A549 (cell line): ENCODE measurements at regions of chr2 and their contacts with region 1.

Region 1: DNA sequence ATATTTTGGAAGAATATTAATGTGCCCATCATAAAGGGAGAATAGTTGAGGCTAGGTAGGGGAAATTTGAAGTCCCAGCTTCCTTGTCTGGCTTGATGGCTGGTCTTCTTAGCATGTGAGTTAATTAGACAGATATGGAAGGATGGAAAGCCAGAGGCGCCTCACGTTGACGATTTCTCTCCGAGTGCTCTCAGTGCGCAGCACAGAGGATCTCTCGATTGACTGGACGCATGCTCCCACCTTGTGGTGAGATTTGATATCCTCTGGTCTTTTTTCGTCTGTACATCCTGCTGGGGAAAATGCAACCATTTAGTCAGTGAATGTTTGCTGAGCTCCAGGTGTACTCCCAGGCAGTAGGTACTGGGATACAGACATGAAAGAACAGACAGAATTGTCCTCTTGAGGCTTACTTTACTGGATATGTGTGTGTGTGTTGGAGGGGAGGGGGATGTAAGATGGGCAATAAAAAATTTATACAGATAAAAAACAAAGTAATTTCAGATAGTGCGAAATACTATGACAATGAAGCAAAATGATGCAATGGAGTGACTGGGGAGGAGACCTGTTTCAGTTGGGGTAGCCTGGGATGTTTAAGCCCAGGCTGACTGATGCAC is 66.9 kb upstream of the ZNG1B start:
- DNase-seq: peak; percentile 67 to 89
- ATAC-seq: peak; percentile 96 to 99
- H3K4me3 ChIP-seq: no peak overlapping the region
- H3K27ac ChIP-seq: peak overlapping the region; percentile 70 to 84
- H3K4me1 ChIP-seq: peaks cover 36% of the 10 kb centered on the region
- CTCF ChIP-seq: peak; percentile 91
- EP300 ChIP-seq: no peak
- POLR2A ChIP-seq: no peak
- RAD21 ChIP-seq: peak; percentile 98 to 99

Region 2: GRCh38 chr2:113083296-113083695 is 287.3 kb before region 1 on chr2:
- CTCF ChIA-PET with region 1: no interaction called
- POLR2A ChIA-PET with region 1: no interaction called
- DNase-seq: no peak
- ATAC-seq: no peak
- H3K4me3 ChIP-seq: no peak overlapping the region
- H3K27ac ChIP-seq: no peak overlapping the region
- H3K4me1 ChIP-seq: peaks cover under 1% of the 10 kb centered on the region; the same call in 1 of the 3 replicates
- CTCF ChIP-seq: no peak
- EP300 ChIP-seq: no peak
- POLR2A ChIP-seq: no peak
- RAD21 ChIP-seq: no peak

Region 3: DNA sequence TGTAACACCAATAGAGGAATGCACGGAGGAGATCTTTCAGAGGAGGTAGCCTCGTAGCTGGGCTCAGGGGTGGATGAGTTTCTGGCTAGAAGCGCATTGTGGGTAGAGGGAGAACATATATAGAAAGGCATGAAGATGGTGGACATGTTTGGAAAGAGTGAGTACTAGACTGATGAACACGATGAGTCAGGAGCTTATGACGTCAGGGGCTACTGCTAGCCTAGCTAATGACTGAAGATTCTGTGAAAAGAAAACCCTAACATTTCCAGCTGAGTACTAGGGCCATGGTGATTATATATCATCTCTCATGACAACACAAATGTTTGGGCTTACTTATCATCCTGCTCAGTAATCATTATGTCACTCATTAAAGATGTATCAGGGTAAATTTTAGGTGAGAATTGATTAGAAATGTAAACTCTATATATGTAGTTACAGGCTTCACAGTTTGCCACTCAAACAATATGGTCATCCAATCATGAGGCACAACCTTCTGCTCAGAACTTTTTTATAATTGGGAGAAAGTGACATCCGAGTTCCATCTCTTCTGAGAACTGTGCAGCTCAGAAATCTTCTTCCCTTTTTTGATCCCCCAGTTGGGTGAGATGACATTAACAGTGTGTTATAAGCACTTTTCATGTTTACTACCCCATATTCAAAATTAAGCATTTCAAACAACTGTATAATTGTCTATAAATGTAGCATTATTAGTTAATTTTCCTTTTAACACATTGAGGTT is 265.4 kb before region 1 on chr2:
- CTCF ChIA-PET with region 1: no interaction called
- POLR2A ChIA-PET with region 1: no interaction called
- DNase-seq: peak; percentile 26 to 36
- ATAC-seq: peak; percentile 76 to 83; a peak in 5 of 6 replicates
- H3K4me3 ChIP-seq: no peak overlapping the region
- H3K27ac ChIP-seq: peak overlapping the region in 1 of 2 experiments; percentile 34; a peak in 1 of 6 replicates
- H3K4me1 ChIP-seq: no peaks in the 10 kb centered on the region
- CTCF ChIP-seq: no peak
- EP300 ChIP-seq: no peak
- POLR2A ChIP-seq: no peak
- RAD21 ChIP-seq: no peak

Region 4: GRCh38 chr2:113211226-113212105 is 159.1 kb before region 1 on chr2:
- CTCF ChIA-PET with region 1: interaction called, 113 read pairs
- POLR2A ChIA-PET with region 1: no interaction called
- DNase-seq: peak; percentile 77 to 95
- ATAC-seq: peak; percentile 80 to 86
- H3K4me3 ChIP-seq: peak overlapping the region; percentile 19; the same call in 2 of the 3 replicates
- H3K27ac ChIP-seq: peak overlapping the region; percentile 96
- H3K4me1 ChIP-seq: peaks cover 75% of the 10 kb centered on the region
- CTCF ChIP-seq: no peak
- EP300 ChIP-seq: peak; percentile 17 to 28; a peak in 1 of 5 replicates
- POLR2A ChIP-seq: no peak
- RAD21 ChIP-seq: 0 out of 5 replicates have a peak, but pooled peaks have one; percentile 2 to 15

Region 5: DNA sequence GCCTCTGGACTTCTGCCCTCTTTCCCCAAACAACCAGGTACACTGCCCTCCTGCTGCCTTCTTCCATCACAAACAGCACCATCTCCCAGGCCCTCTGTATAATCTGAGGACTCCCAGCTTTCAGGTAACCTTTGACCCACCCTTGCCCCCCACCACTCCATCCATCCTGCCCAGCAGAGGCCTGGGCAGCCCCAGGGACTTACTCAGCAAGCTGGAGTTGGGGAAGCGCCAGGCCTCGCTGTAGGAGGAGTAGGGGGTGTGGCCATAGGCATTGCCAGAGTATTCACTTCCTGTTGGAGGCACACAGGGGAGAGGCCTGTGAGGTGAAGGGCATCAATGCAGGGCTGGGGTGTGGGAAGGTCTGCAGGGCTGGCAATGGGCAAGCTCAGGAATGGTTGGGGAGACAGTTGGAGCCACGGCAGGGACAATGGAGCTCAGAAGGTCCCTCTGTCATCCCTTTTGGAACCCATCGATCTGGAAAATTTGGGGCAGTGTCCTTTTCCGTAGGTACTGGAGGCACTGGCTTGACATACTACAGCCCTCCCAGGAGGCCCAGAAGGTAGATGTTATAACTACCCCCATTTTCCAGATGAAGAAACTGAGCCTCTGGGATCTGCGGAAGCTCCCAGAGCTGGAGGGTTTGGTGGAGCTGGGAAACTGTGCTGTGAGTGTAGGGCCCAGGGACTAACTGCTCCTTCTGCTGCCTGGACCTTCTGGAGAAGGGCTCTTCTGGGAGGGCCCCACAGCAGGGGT is 150.5 kb before region 1 on chr2:
- CTCF ChIA-PET with region 1: interaction called, 18 read pairs
- POLR2A ChIA-PET with region 1: no interaction called
- DNase-seq: peak; percentile 64 to 92
- ATAC-seq: peak; percentile 54 to 73
- H3K4me3 ChIP-seq: peak overlapping the region; percentile 31
- H3K27ac ChIP-seq: peak overlapping the region; percentile 96
- H3K4me1 ChIP-seq: peaks cover 67% of the 10 kb centered on the region
- CTCF ChIP-seq: no peak
- EP300 ChIP-seq: no peak
- POLR2A ChIP-seq: peak; percentile 62
- RAD21 ChIP-seq: no peak

Region 6: DNA sequence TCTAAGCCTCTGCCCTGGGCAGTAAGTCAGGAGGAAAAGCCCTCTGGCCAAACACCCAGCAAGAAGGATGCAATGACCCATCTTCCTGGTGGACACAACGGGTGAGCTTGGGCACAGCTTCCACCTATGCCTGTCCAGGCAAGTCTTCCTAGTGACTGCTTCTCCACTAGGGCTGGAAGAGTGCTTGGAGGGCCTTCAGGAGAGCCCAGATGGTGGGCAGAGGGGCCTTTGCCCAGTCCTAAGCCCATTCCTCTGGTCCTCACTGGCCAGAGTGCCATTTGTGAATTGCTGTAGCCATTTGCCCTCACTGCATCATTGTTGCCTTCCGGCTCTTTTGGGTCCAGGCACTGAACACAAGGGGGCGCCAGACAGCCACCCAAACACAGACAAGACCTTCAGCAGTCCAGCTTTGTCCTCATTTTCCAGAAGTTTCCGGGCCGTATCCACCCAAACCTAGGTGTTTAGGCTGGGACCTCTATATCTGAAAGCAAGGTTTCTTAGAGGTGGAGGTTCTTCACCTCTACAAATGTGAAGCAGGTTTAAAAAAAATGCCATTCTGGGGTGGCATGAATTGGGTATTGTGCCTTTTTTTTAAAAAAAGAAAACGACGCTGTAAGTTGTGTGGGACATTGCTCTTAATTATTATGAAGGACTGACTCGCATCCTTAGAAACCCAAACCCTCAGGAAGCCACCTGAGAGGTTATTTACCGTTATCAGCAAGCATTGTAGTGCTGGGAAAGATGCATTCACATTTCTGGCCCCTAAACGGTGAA is 121.4 kb before region 1 on chr2:
- CTCF ChIA-PET with region 1: interaction called, 119 read pairs
- POLR2A ChIA-PET with region 1: no interaction called
- DNase-seq: peak; percentile 67 to 83
- ATAC-seq: peak; percentile 67 to 92; a peak in 4 of 6 replicates
- H3K4me3 ChIP-seq: no peak overlapping the region
- H3K27ac ChIP-seq: peak overlapping the region; percentile 97 to 98
- H3K4me1 ChIP-seq: peaks cover 24% of the 10 kb centered on the region
- CTCF ChIP-seq: peak; percentile 82
- EP300 ChIP-seq: no peak
- POLR2A ChIP-seq: no peak
- RAD21 ChIP-seq: peak; percentile 95 to 97

Region 7: DNA sequence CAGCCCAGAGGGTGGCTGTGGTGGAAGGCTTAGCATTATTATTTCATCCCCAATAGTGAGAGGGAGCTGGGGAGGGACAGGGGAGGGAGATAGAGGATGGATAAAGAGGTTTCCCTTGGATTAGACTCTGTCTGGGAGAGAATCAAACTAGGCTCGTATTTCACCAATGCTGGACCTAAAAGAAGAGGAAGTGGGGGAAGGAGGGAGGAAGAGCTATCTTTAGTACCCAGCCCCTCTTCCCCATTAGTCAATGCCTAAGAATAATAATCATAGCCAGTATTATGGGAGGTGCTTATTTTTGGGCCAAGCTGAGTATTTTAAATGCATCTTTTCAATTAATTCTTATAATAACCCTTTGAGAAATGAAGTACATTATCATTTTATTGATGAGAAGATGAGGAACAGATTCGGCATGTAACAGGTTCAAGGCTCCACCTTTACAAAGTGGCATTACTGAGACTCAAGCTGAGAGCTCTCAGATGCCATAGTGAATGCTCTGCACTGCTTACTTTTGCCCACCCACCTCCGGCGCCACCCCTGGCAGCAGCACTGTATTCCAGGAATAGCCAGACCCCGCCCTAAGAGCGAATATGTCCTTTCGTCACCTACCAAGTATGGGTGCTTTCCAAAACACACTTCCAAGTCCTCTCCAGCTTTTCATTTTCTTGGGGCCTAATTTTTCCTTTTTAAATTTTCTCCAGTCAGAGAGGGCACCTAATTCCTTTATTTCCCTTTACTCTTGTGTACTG is 112.9 kb before region 1 on chr2:
- CTCF ChIA-PET with region 1: interaction called, 30 read pairs
- POLR2A ChIA-PET with region 1: no interaction called
- DNase-seq: no peak
- ATAC-seq: 0 out of 6 replicates have a peak, but pooled peaks of 1 of the 2 experiments have one; percentile 29
- H3K4me3 ChIP-seq: no peak overlapping the region
- H3K27ac ChIP-seq: peak overlapping the region in 1 of 2 experiments; percentile 34; a peak in 2 of 6 replicates
- H3K4me1 ChIP-seq: peaks cover 8% of the 10 kb centered on the region; the same call in 2 of the 3 replicates
- CTCF ChIP-seq: no peak
- EP300 ChIP-seq: no peak
- POLR2A ChIP-seq: no peak
- RAD21 ChIP-seq: no peak

Region 8: GRCh38 chr2:113357071-113357470 is 13.5 kb before region 1 on chr2:
- CTCF ChIA-PET with region 1: interaction called, 30 read pairs
- POLR2A ChIA-PET with region 1: no interaction called
- DNase-seq: no peak
- ATAC-seq: no peak
- H3K4me3 ChIP-seq: no peak overlapping the region
- H3K27ac ChIP-seq: peak overlapping the region in 1 of 2 experiments; percentile 23; a peak in 1 of 6 replicates
- H3K4me1 ChIP-seq: 0 out of 3 replicates have a peak, but pooled peaks cover 14% of the 10 kb centered on the region
- CTCF ChIP-seq: no peak
- EP300 ChIP-seq: no peak
- POLR2A ChIP-seq: no peak
- RAD21 ChIP-seq: no peak